Heart left ventricle (tissue), 16 donors: ENCODE measurements at regions of chr18 and their contacts with region 1.

Region 1: DNA sequence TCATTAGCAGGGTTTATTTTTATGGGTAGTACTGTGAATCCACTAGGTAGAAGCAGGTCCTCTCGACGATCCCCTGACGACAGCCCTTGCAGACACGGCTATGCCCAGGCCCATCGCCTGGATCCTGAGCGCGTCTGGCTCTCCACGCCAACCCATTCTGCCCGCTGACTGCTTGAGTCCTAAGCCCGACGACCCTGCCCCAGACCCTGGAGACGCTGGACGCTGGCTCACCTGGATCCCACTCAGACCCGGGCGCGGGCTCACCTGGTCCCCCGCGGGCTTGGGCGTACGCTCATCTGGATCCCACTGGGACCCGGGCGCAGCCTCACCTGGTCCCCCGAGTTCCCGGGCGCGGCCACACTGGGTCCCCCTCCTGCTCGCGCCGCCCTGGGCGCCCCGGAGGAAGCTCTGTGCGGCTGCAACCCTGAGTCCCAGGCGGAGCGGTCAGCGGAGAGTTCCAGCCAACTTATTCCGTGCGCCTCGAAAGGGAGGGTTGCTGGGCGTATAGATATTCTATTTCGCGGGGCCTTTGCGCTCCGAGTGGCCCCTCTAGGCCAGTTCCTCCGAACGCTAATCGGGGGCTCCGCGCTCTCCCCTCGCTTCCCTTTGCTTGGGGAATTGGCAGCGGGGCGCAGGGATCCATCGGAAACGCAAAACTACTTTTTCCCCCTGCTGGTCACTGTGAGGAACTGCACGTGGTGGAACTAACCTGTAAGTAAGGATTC is 22.4 kb upstream of the RMP24 start:
- DNase-seq: peak; percentile 40 to 76 (median 52)
- ATAC-seq: peak; percentile 50 to 85 (median 82)
- H3K4me3 ChIP-seq: peak overlapping the region; percentile 18 to 69 (median 60)
- H3K27ac ChIP-seq: peak overlapping the region in 1 of 12 donors; percentile 2
- H3K4me1 ChIP-seq: peaks cover 0 to 13% (median 0%) of the 10 kb centered on the region in 12 donors
- H3K27me3 ChIP-seq: peaks cover 0 to 8% (median 0%) of the 10 kb centered on the region in 9 donors
- CTCF ChIP-seq: peak; percentile 84 to 96 (median 93)
- POLR2A ChIP-seq: no peak

Region 2: GRCh38 chr18:35386600-35387351 is 563.3 kb before region 1 on chr18:
- intact Hi-C with region 1: loop called in 6 of 10 experiments (anchors 5 to 10 kb)
- DNase-seq: peak; percentile 57 to 69 (median 61)
- ATAC-seq: peak in 3 of 4 donors; percentile 66 to 81 (median 69)
- H3K4me3 ChIP-seq: no peak overlapping the region
- H3K27ac ChIP-seq: peak overlapping the region in 1 of 12 donors; percentile 16
- H3K4me1 ChIP-seq: peaks cover 0 to 5% (median 0%) of the 10 kb centered on the region in 12 donors
- H3K27me3 ChIP-seq: peaks cover 0 to 3% (median 0%) of the 10 kb centered on the region in 9 donors
- CTCF ChIP-seq: peak; percentile 86 to 99 (median 92)
- POLR2A ChIP-seq: no peak

Region 3: DNA sequence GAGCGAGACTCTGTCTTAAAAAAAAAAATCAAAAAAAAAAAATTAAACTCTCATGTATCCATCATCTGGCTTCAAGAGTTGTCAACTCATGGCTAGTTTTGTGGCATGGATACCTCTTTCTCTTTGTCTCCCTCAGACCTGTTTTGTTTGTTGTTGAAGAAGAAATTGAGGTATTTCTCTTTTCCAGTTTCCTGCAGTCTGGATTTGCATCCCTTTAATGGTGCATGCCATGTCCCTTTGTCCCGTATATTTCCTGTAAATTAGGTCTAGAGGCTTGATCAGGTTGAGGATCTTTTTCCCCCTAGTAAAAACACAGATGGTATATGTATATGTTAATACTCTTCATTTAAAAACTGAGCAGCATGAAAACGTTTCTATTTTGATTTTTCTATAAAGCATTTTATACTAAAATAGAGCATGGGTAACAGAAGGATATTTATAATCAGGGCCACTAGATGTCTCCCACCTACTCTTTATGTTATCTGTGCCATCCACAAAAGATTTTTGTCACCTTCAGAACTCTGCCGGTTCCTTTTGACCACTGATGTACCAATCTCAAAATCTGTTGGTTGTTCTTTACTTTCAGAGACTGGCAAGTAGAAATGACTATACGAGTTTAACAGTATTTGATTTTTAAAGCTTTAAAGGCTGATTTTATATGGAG is 288.4 kb before region 1 on chr18:
- intact Hi-C with region 1: loop called in 1 of 10 experiments (anchors 5 kb)
- DNase-seq: no peak
- ATAC-seq: no peak
- H3K4me3 ChIP-seq: no peak overlapping the region
- H3K27ac ChIP-seq: no peak overlapping the region
- H3K4me1 ChIP-seq: peaks cover 0 to 6% (median 0%) of the 10 kb centered on the region in 12 donors
- H3K27me3 ChIP-seq: no peaks in the 10 kb centered on the region
- CTCF ChIP-seq: peak in 3 of 12 donors; percentile 6 to 18 (median 10)
- POLR2A ChIP-seq: no peak

Region 4: GRCh38 chr18:35756506-35757117 is 193.5 kb before region 1 on chr18:
- intact Hi-C with region 1: loop called (anchors 1 to 2 kb)
- DNase-seq: peak in 2 of 5 donors; percentile 50 to 59
- ATAC-seq: peak in 3 of 4 donors; percentile 75 to 85 (median 79)
- H3K4me3 ChIP-seq: no peak overlapping the region
- H3K27ac ChIP-seq: no peak overlapping the region
- H3K4me1 ChIP-seq: no peaks in the 10 kb centered on the region
- H3K27me3 ChIP-seq: no peaks in the 10 kb centered on the region
- CTCF ChIP-seq: peak; percentile 71 to 89 (median 86)
- POLR2A ChIP-seq: no peak